ENCODE measurements at regions of chr15 and their contacts with region 1.

Region 1: GRCh38 chr15:94119923-94120775 is 111.2 kb upstream of the MCTP2 start:
- DNase-seq: peak in 31 of 35 experiments; percentile 7 to 77 (median 29)
- ATAC-seq: peak; percentile 71 to 84 (median 76)
- H3K4me3 ChIP-seq: no peak overlapping the region
- H3K4me3 Mint-ChIP-seq: no peak overlapping the region
- H3K27ac ChIP-seq: no peak overlapping the region
- H3K27ac Mint-ChIP-seq: no peak overlapping the region
- H3K4me1 ChIP-seq: no peaks in the 10 kb centered on the region
- H3K4me1 Mint-ChIP-seq: no peaks in the 10 kb centered on the region
- H3K27me3 ChIP-seq: no peaks in the 10 kb centered on the region
- H3K27me3 Mint-ChIP-seq: no peaks in the 10 kb centered on the region

Region 2: DNA sequence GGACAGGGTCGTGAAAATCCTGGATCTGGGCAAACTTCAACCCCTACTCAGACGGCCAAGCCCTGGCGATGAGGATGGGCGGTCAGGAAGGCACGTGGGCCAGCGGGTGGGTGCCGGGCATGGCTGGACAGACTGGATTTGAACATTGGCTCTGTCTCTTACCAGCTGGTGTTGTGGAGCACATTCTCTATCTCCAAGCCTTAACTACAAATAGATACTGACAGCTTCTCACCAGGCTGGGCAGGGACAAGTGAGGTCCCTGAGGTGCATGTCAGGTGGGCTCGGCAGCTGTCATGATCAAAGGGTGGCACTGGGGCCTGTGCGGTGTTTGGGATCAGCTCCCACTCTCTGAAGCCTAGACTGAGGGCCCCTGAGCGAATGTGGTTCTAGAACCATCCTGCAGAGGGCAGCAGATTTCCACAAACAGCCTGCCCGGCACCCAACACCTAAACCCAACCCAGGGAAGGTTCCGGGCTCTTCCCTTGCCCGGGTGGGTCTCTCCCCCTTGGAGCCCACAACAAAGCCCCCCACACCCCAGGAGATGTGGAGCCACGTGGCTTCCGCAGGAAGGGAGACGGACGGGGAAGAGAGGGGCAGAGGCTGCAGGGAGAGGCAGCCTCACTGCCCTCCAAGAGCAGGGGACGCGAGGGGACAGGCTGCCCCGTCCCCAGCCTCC is 1089.6 kb before region 1 on chr15:
- CTCF ChIA-PET with region 1: interaction called, 8 to 50 read pairs
- POLR2A ChIA-PET with region 1: no interaction called
- DNase-seq: peak in 34 of 35 experiments; percentile 25 to 83 (median 52)
- ATAC-seq: peak; percentile 74 to 79 (median 77)
- H3K4me3 ChIP-seq: no peak overlapping the region
- H3K4me3 Mint-ChIP-seq: peak overlapping the region in 1 of 3 donors; percentile 26
- H3K27ac ChIP-seq: no peak overlapping the region
- H3K27ac Mint-ChIP-seq: peak overlapping the region; percentile 48 to 67
- H3K4me1 ChIP-seq: peaks cover 0 to 32% of the 10 kb centered on the region in 2 experiments
- H3K4me1 Mint-ChIP-seq: peaks cover 22 to 24% (median 22%) of the 10 kb centered on the region in 3 donors
- H3K27me3 ChIP-seq: peaks cover 0 to 8% of the 10 kb centered on the region in 2 experiments
- H3K27me3 Mint-ChIP-seq: no peaks in the 10 kb centered on the region

Region 3: DNA sequence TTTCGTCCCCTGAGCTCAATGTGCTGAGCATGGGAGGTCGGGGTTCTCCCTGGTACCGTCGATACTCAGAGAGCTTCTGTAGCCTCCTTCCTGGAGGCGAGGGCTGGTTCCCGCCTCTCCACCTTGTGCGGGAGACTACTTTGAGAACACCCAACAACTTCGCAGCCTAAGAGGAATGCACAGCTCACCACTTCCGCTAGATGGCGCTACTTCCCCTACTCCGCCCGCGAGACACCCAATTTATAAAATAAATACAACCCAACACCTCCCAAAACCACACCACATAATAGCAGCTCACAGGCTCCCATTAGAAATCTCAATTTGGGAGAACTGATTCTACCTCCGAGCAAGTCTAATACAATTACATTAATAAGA is 1032.3 kb before region 1 on chr15:
- CTCF ChIA-PET with region 1: interaction called, 7 to 23 read pairs
- POLR2A ChIA-PET with region 1: interaction called in 1 of 2 experiments, 3 read pairs
- DNase-seq: peak; percentile 19 to 86 (median 59)
- ATAC-seq: peak; percentile 60 to 66 (median 64)
- H3K4me3 ChIP-seq: peak overlapping the region; percentile 24 to 68
- H3K4me3 Mint-ChIP-seq: peak overlapping the region; percentile 74 to 83 (median 76)
- H3K27ac ChIP-seq: no peak overlapping the region
- H3K27ac Mint-ChIP-seq: no peak overlapping the region
- H3K4me1 ChIP-seq: peaks cover 0 to 21% of the 10 kb centered on the region in 2 experiments
- H3K4me1 Mint-ChIP-seq: peaks cover 8 to 18% (median 17%) of the 10 kb centered on the region in 3 donors
- H3K27me3 ChIP-seq: peaks cover 6 to 51% of the 10 kb centered on the region in 2 experiments
- H3K27me3 Mint-ChIP-seq: peaks cover 51 to 68% of the 10 kb centered on the region in 2 donors

Region 4: GRCh38 chr15:93929375-93930094 is 190.6 kb before region 1 on chr15:
- CTCF ChIA-PET with region 1: no interaction called
- POLR2A ChIA-PET with region 1: no interaction called
- DNase-seq: no peak
- ATAC-seq: no peak
- H3K4me3 ChIP-seq: no peak overlapping the region
- H3K4me3 Mint-ChIP-seq: no peak overlapping the region
- H3K27ac ChIP-seq: no peak overlapping the region
- H3K27ac Mint-ChIP-seq: no peak overlapping the region
- H3K4me1 ChIP-seq: no peaks in the 10 kb centered on the region
- H3K4me1 Mint-ChIP-seq: peaks cover 0 to 8% (median 8%) of the 10 kb centered on the region in 3 donors
- H3K27me3 ChIP-seq: no peaks in the 10 kb centered on the region
- H3K27me3 Mint-ChIP-seq: no peaks in the 10 kb centered on the region

Region 5: DNA sequence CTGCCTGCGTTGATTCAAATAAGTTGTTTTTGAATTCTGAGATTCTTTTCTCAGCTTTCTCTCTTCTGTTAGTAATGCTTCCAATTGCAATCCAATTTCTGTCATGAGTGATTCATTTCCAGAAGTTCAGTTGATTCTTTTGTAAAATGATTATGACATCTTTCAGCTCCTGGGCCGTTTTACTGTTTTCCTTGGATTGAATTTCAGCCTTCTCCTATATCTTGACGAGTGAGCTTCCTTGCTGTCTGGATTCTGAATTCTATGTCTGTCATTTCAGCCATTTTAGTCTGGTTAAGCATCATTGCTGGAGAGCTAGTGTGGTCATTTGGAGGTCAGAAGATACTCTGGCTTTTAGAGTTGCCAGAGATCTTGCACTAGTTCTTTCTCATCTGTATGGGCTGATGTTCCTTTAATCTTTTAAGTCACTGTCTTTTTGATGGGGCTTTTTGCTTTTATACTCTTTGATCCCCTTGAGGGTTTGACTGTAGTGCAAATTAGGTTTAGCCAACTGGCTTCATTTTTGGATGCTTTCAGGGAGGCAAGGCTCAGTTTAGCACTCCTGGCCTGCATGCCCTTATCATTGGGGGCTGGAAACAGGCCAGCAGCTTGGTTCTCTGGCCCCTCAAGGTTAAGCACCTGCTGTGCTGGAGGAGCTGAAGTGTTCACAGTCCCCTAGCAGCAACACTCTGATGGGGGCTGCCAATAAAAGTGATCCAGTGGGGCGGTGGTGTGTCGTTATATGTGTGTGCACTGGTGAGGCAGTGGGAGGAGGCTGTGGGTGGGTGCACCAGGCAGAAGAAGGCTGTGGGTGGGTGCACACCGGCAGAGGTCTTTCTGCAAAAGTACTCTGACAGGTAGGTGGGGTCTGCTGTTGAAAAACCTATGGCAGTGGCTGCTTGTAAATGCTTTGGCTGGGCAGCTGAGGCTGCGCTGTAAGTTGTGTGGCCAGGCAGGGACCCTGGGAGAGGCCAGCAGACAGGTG is 162.4 kb after region 1 on chr15:
- CTCF ChIA-PET with region 1: no interaction called
- POLR2A ChIA-PET with region 1: no interaction called
- DNase-seq: no peak
- ATAC-seq: no peak
- H3K4me3 ChIP-seq: no peak overlapping the region
- H3K4me3 Mint-ChIP-seq: no peak overlapping the region
- H3K27ac ChIP-seq: no peak overlapping the region
- H3K27ac Mint-ChIP-seq: no peak overlapping the region
- H3K4me1 ChIP-seq: peaks cover 6 to 7% of the 10 kb centered on the region in 2 experiments
- H3K4me1 Mint-ChIP-seq: peaks cover 26 to 61% (median 40%) of the 10 kb centered on the region in 3 donors
- H3K27me3 ChIP-seq: no peaks in the 10 kb centered on the region
- H3K27me3 Mint-ChIP-seq: no peaks in the 10 kb centered on the region